Activated CD8-positive, alpha-beta memory T cell treated with anti-CD3 and anti-CD28 coated beads, Interleukin-2, amount 10 ng/mL, durations not matched to agents 7 days and 5 days (primary cell): ENCODE measurements at regions of chr5 and their contacts with region 1.

Region 1: DNA sequence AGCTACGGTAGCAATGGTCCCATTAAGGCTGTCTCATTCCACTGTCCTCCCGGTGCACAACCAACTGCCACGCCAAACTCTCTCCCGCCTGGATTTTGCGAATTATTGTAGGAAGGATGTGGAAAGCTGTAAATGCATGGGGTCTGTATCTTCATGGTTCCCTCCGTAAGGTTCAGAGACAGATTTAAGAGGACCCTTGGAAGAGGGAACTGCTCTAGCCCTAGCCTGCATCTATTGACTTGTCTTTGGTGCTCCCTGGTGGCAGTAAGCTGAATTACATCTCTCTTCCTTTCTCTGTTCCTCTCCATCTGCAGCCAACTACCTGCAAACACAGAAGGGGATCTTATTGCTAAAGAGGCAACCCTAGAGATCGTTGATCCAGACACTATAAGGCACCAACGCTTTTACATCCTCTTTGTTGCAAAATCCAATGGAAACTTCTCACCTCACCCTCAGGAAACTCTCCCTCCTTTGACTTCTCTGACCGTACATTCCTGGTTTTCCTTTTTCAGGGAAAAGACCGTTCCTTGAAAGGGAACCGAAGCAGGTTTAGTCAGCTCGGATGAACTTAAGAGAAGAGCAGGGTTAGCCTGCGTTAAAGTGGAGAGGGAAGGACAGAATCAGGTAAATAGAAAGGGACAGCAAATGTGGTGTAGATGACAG is 11.9 kb downstream of the CAPSL start:
- DNase-seq: peak; percentile 76
- ATAC-seq: peak; percentile 59
- H3K4me3 Mint-ChIP-seq: peak overlapping the region; percentile 55
- H3K27ac Mint-ChIP-seq: no peak overlapping the region
- H3K4me1 Mint-ChIP-seq: peaks cover 34% of the 10 kb centered on the region
- H3K27me3 Mint-ChIP-seq: peaks cover 8% of the 10 kb centered on the region

Region 2: GRCh38 chr5:35617435-35618303 is 308.9 kb before region 1 on chr5 and contains the start of gene SPEF2:
- CTCF ChIA-PET with region 1: interaction called, 71 read pairs
- DNase-seq: peak; percentile 91
- ATAC-seq: peak; percentile 94
- H3K4me3 Mint-ChIP-seq: peak within 1 kb of the TSS; percentile 84
- H3K27ac Mint-ChIP-seq: peak within 1 kb of the TSS; percentile 99
- H3K4me1 Mint-ChIP-seq: peaks cover 47% of the 10 kb centered on the region
- H3K27me3 Mint-ChIP-seq: no peaks in the 10 kb centered on the region
- total RNA-seq, gene SPEF2: 5.6 to 14.1 TPM

Region 3: DNA sequence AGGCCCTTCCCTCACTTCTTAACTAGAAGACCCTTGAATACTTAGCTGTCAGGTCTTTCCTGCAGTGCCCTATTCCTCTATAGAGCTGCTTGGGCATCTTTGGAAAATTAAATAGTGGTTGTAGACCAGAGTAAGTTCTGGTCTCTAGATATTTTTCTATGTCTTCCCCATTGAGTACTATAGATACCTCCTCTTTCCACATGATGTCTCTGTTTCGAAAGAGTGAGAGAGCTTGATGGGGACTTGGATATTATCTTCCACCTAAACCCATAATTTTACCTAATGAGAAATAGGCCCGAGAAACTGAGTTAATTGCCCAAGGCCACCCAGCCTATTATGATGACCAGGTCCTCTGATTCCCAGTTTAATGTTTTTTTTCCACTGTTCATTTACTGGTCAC is 268.6 kb before region 1 on chr5:
- CTCF ChIA-PET with region 1: interaction called, 140 read pairs
- DNase-seq: no peak
- ATAC-seq: peak; percentile 39
- H3K4me3 Mint-ChIP-seq: no peak overlapping the region
- H3K27ac Mint-ChIP-seq: no peak overlapping the region
- H3K4me1 Mint-ChIP-seq: peaks cover 27% of the 10 kb centered on the region
- H3K27me3 Mint-ChIP-seq: no peaks in the 10 kb centered on the region

Region 4: DNA sequence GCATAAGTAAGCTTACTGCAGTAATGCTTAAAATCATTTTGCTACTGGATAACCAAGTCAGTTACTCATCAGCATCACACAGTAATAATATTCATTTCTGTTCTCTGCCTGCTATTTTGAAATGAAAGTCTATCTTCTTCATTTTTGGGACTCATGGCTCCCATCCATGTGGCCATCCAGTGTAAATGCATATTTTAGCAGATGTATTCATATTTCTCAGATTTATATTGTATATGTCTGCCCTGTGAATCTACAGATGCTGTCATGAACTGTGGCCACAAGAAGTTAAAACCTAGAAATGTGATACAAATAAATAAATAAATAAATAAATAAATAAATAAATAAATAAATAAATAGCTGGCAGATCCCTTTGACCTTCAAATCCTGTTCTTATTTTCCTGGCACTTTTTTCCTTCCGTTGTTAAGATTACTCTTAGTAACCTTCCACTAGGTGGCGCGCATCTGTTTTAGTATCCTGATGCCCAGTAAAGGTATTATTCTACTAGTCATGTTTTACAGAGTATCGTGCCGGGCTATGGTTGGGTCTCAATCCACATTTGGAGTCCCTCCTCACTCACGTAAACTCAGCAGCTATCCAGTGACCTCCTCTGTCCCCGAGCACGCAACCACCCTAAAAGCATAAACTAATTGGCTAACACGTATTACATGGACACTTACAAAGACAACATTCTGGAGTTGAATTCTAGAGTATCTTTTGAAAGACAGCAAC is 149.0 kb before region 1 on chr5:
- CTCF ChIA-PET with region 1: interaction called, 106 read pairs
- DNase-seq: peak; percentile 82
- ATAC-seq: peak; percentile 69
- H3K4me3 Mint-ChIP-seq: no peak overlapping the region
- H3K27ac Mint-ChIP-seq: peak overlapping the region; percentile 77
- H3K4me1 Mint-ChIP-seq: peaks cover 63% of the 10 kb centered on the region
- H3K27me3 Mint-ChIP-seq: no peaks in the 10 kb centered on the region

Region 5: GRCh38 chr5:35852084-35852734 is 74.3 kb before region 1 on chr5:
- CTCF ChIA-PET with region 1: interaction called, 55 read pairs
- DNase-seq: peak; percentile 59
- ATAC-seq: peak; percentile 22
- H3K4me3 Mint-ChIP-seq: peak overlapping the region; percentile 72
- H3K27ac Mint-ChIP-seq: peak overlapping the region; percentile 96
- H3K4me1 Mint-ChIP-seq: peaks cover 66% of the 10 kb centered on the region
- H3K27me3 Mint-ChIP-seq: no peaks in the 10 kb centered on the region

Region 6: DNA sequence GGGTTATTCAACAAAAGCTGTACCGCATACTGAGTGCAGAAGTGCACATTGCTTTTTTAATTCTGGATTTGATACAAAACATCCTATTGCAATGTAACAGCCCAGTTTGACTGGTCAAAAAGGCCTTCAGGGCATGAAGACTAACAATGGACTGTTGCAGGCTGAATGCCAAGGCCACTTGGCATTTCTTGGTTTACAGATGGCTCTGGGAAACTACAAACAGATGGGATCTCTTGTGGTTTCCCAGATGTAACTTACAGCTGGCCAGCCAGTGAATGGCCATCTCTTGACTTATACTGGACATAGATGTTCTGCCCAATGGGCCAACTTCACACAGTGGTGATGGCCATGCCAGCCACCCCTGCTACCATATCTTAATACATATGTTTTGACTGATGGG is 103.4 kb after region 1 on chr5:
- CTCF ChIA-PET with region 1: no interaction called
- DNase-seq: no peak
- ATAC-seq: no peak
- H3K4me3 Mint-ChIP-seq: no peak overlapping the region
- H3K27ac Mint-ChIP-seq: no peak overlapping the region
- H3K4me1 Mint-ChIP-seq: no peaks in the 10 kb centered on the region
- H3K27me3 Mint-ChIP-seq: no peaks in the 10 kb centered on the region

Region 7: GRCh38 chr5:36222620-36223019 is 296.1 kb after region 1 on chr5:
- CTCF ChIA-PET with region 1: no interaction called
- DNase-seq: no peak
- ATAC-seq: no peak
- H3K4me3 Mint-ChIP-seq: no peak overlapping the region
- H3K27ac Mint-ChIP-seq: no peak overlapping the region
- H3K4me1 Mint-ChIP-seq: no peaks in the 10 kb centered on the region
- H3K27me3 Mint-ChIP-seq: no peaks in the 10 kb centered on the region